ENCODE measurements at regions of chr15 and their contacts with region 1.

Region 1: DNA sequence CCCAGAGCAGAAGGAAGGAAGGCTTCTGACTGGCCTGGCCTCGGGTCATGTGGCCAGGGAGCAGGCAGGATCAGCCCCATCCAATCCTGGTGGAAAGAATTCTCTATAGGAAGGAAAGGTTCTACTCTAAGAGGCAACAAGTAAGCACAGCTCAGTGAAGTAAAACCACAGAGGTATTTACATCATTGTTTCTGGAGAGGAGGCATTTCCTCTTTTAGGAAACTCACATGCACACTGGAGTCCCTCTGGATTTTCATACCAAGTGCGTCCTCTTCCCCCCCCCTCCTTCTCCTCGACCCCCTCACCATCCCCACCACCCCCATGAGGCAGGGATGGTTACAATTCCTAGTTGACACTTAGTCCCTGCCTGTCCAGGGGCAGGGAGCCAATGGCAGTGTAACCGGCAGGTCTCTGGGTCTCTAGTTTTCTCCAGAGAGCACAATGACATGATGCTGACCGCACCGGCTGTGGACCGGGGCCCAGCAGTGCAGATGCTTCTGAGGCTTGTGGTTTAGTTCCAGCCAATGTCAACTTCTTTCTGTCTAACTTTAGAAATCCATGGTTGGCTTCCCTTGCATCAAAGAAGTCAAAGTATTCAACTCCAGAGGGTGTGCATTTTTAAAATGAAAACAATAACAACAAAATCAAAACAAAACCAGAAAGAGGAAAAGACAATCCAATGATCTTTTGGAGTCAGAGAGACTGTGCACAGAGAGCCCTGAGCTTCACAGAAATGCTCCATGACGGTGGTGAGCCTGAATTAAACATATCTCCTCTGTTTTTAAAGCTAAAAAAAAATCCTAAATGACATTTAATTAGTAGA is 230.3 kb upstream of the TLE3 start:
- DNase-seq: no peak
- ATAC-seq: peak; percentile 85
- H3K4me3 Mint-ChIP-seq: peak overlapping the region; percentile 63
- H3K27ac Mint-ChIP-seq: peak overlapping the region; percentile 65
- H3K4me1 Mint-ChIP-seq: peaks cover 25% of the 10 kb centered on the region
- H3K27me3 Mint-ChIP-seq: no peaks in the 10 kb centered on the region
- CTCF ChIP-seq: no peak

Region 2: DNA sequence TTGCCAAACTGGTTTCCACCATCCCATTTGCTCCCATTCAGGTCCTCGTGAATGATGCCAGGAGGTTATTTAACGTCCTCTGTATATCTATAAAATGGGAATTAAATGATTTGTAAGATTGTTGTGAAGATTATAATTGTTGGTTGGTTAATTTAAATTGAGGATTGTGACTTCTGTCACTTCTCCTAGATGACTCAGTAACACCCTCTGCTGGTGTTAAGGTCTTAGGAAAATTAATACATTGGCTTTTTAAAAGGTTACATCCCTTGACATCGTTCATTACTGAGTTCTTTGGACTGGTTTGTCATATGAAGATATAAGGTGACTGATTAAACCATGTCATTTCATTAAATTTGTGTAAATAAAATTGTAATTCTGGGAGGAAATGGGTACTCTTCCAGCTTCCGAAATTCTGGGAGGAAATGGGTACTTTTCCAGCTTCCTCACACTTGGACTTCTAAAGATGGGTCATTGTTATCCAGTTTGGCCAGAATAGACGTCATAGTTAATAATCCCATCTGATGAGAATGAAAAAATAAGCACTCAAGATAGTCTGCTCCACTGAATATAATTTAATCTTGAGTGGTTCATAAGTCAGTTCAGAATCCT is 1062.6 kb before region 1 on chr15:
- CTCF ChIA-PET with region 1: no interaction called
- POLR2A ChIA-PET with region 1: no interaction called
- intact Hi-C with region 1: no loop called
- DNase-seq: no peak
- ATAC-seq: no peak
- H3K4me3 Mint-ChIP-seq: no peak overlapping the region
- H3K27ac Mint-ChIP-seq: no peak overlapping the region
- H3K4me1 Mint-ChIP-seq: no peaks in the 10 kb centered on the region
- H3K27me3 Mint-ChIP-seq: no peaks in the 10 kb centered on the region
- CTCF ChIP-seq: no peak

Region 3: DNA sequence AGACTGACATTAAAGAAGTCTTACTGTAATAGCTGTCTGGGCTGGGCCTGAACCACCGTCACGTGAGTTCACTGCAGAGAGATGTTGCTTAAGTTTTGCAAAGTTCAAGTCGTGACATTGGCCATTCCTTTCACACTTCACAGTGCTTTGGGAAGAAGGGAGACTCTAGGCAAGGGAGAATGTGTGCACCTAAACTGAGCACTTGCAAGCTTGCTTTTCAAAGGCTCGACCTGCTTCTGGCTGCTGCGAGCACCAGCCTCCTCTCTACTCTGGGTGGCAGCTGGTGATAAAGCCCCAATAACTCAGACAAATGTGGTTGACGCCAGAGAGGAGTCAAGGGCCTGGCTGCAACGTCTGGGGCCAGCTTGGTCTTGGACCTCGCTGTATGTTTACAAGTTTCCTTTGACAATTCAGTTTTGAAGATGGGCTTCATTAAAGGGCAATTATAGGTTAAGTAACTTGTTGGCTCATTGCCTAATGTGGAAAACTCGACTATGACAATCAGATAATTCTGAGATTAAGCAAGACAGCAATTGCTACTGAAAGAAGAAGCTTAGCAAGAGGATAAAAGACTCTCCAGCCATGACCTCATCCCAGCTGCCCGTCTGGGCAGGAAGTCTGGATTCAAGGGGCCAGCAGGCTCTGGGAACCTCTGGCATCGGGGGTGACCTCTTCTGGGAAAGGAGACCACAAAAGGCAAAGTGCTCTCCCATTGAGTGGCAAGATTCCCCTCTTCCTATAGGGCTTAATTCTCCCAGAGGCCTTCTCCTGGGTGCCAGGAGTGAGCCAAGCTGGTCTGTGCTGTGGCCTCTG is 11.8 kb after region 1 on chr15:
- CTCF ChIA-PET with region 1: no interaction called
- POLR2A ChIA-PET with region 1: no interaction called
- intact Hi-C with region 1: no loop called
- DNase-seq: no peak
- ATAC-seq: no peak
- H3K4me3 Mint-ChIP-seq: no peak overlapping the region
- H3K27ac Mint-ChIP-seq: no peak overlapping the region
- H3K4me1 Mint-ChIP-seq: peaks cover 17% of the 10 kb centered on the region
- H3K27me3 Mint-ChIP-seq: no peaks in the 10 kb centered on the region
- CTCF ChIP-seq: no peak

Region 4: DNA sequence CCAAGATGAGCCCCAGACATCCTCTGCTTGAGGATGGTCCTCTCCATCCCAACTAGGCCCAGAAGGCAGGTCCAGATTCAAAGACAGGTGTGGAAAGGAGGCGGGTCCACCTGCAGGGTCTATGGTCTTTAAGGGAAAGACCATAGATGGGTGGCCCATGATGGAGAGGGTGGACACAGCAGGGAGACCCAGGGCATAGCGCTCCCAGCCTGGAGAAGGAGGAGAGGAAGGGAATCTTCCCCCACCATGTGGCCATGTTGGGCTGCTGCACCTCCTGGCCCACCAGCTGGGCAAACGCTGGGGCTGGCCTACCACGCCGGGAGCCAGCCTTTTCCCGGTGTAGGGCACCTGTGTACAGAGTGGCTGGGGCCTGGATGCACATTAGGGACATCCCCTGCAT is 34.8 kb after region 1 on chr15:
- CTCF ChIA-PET with region 1: interaction called, 5 read pairs
- POLR2A ChIA-PET with region 1: no interaction called
- intact Hi-C with region 1: loop called (anchors 5 kb)
- DNase-seq: no peak
- ATAC-seq: no peak
- H3K4me3 Mint-ChIP-seq: no peak overlapping the region
- H3K27ac Mint-ChIP-seq: no peak overlapping the region
- H3K4me1 Mint-ChIP-seq: peaks cover 13% of the 10 kb centered on the region
- H3K27me3 Mint-ChIP-seq: no peaks in the 10 kb centered on the region
- CTCF ChIP-seq: no peak